ENCODE measurements at regions of chr1 and their contacts with region 1.

Region 1: DNA sequence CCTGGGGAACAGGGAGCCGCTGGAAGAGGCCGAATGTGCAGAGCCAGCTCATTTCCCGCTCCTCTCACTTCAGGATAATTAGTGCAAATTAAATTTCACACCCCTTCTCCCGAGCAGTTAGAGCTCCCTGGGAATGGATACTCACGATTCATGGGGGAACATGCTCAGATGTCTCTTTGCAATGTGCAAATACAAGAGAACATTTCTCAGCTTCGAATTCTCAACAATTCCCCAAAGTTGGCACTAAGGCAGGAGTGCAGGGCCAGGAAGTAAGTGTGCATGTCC is 54.9 kb downstream of the CAMK2N1 start:
- DNase-seq: no peak
- ATAC-seq: no peak
- H3K4me3 ChIP-seq: no peak overlapping the region
- H3K4me3 Mint-ChIP-seq: no peak overlapping the region
- H3K27ac ChIP-seq: no peak overlapping the region
- H3K27ac Mint-ChIP-seq: no peak overlapping the region
- H3K4me1 ChIP-seq: no peaks in the 10 kb centered on the region
- H3K4me1 Mint-ChIP-seq: no peaks in the 10 kb centered on the region
- H3K27me3 ChIP-seq: peaks cover 0 to 50% of the 10 kb centered on the region in 2 experiments
- H3K27me3 Mint-ChIP-seq: peaks cover 58 to 65% of the 10 kb centered on the region in 2 donors

Region 2: GRCh38 chr1:20390589-20391331 is 40.4 kb before region 1 on chr1:
- CTCF ChIA-PET with region 1: interaction called in 1 of 2 experiments, 13 read pairs
- POLR2A ChIA-PET with region 1: no interaction called
- DNase-seq: no peak
- ATAC-seq: no peak
- H3K4me3 ChIP-seq: no peak overlapping the region
- H3K4me3 Mint-ChIP-seq: no peak overlapping the region
- H3K27ac ChIP-seq: no peak overlapping the region
- H3K27ac Mint-ChIP-seq: no peak overlapping the region
- H3K4me1 ChIP-seq: no peaks in the 10 kb centered on the region
- H3K4me1 Mint-ChIP-seq: no peaks in the 10 kb centered on the region
- H3K27me3 ChIP-seq: peaks cover 0 to 39% of the 10 kb centered on the region in 2 experiments
- H3K27me3 Mint-ChIP-seq: peaks cover 64 to 67% of the 10 kb centered on the region in 2 donors